Mammary epithelial cell (primary cell): ENCODE measurements at regions of chr20 and their contacts with region 1.

Region 1: GRCh38 chr20:21615617-21616080 is 89.8 kb upstream of the PAX1 start:
- DNase-seq: peak; percentile 43
- H3K4me3 ChIP-seq: no peak overlapping the region
- H3K27ac ChIP-seq: no peak overlapping the region
- H3K4me1 ChIP-seq: no peaks in the 10 kb centered on the region
- H3K27me3 ChIP-seq: peaks cover 2% of the 10 kb centered on the region
- CTCF ChIP-seq: peak; percentile 87 to 95

Region 2: GRCh38 chr20:20837574-20838021 is 778.1 kb before region 1 on chr20:
- CTCF ChIA-PET with region 1: no interaction called
- dilution Hi-C with region 1: no loop called
- in situ Hi-C with region 1: no loop called
- intact Hi-C with region 1: loop called (anchors 1 kb)
- DNase-seq: no peak
- H3K4me3 ChIP-seq: no peak overlapping the region
- H3K27ac ChIP-seq: no peak overlapping the region
- H3K4me1 ChIP-seq: no peaks in the 10 kb centered on the region
- H3K27me3 ChIP-seq: peaks cover 2% of the 10 kb centered on the region
- CTCF ChIP-seq: peak; percentile 58 to 63

Region 3: DNA sequence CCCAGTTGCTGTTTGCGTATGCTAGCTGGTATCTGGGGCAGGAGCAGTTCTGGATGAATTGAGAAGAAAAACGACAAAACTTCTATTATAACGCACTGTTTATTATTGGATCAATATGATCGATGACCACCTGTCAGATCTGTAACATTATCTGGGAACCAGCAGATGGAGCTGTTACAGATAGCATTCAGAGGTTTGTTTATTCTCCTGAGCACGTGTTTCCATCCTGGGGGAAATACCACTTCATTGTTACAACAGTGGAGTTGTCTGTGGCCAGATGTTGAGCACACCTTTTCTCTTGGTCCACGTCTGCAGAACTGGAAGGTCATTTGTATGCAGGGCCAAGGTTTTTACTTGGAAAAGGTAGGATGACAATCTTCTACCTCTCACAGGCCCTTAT is 85.8 kb before region 1 on chr20:
- CTCF ChIA-PET with region 1: interaction called, 6 read pairs
- dilution Hi-C with region 1: no loop called
- in situ Hi-C with region 1: no loop called
- intact Hi-C with region 1: loop called (anchors 2 kb)
- DNase-seq: no peak
- H3K4me3 ChIP-seq: no peak overlapping the region
- H3K27ac ChIP-seq: no peak overlapping the region
- H3K4me1 ChIP-seq: no peaks in the 10 kb centered on the region
- H3K27me3 ChIP-seq: peaks cover 3% of the 10 kb centered on the region
- CTCF ChIP-seq: peak; percentile 23 to 55

Region 4: GRCh38 chr20:21936261-21936660 is 320.6 kb after region 1 on chr20:
- CTCF ChIA-PET with region 1: no interaction called
- dilution Hi-C with region 1: no loop called
- in situ Hi-C with region 1: no loop called
- intact Hi-C with region 1: no loop called
- DNase-seq: no peak
- H3K4me3 ChIP-seq: no peak overlapping the region
- H3K27ac ChIP-seq: no peak overlapping the region
- H3K4me1 ChIP-seq: no peaks in the 10 kb centered on the region
- H3K27me3 ChIP-seq: no peaks in the 10 kb centered on the region
- CTCF ChIP-seq: no peak